ENCODE measurements at regions of chr22 and their contacts with region 1.

Region 1: DNA sequence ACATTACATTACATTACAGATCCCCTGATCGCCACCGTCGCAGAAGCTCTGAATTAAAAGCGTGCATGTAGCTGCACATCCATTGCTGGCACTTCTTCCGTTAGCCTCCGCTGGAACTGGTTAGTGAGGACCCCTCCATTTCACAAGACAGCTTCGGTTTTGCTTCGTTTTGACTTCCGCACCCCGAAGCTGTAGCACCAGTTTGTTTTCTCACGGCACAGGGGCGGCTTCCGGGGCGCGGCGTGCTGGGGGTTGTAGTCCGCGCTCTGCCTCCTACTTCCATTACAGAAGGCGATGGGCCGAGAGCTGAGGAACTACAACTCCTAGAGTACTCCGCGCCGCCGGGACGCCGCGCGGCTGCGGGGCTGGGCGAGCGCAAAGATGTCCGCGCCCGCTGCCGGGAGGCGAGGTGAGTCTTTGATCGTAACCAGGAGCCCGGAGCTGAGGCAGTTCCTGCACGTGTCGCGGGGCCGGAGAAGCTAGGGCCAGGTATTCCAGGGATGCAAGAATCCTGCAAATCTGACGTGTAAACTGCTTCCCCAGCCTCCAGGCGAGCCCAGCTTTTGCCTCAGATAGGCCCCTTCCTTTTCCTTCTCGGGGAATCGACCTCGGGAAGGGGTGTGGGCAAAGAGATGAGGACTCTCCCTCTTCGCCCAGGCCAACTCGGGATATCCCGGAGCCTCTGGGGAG is at the start of gene PEX26:
- DNase-seq: peak; percentile 95
- CTCF ChIP-seq: no peak

Region 2: GRCh38 chr22:17742527-17742902 is 335.3 kb before region 1 on chr22:
- CTCF ChIA-PET with region 1: interaction called, 66 read pairs
- POLR2A ChIA-PET with region 1: no interaction called
- DNase-seq: peak; percentile 92
- CTCF ChIP-seq: peak; percentile 87

Region 3: GRCh38 chr22:17842386-17842785 is 235.4 kb before region 1 on chr22:
- CTCF ChIA-PET with region 1: interaction called, 15 read pairs
- POLR2A ChIA-PET with region 1: no interaction called
- DNase-seq: peak; percentile 39
- CTCF ChIP-seq: no peak

Region 4: GRCh38 chr22:17903564-17904295 is 174.1 kb before region 1 on chr22:
- CTCF ChIA-PET with region 1: interaction called, 11 read pairs
- POLR2A ChIA-PET with region 1: no interaction called
- DNase-seq: no peak
- CTCF ChIP-seq: no peak

Region 5: DNA sequence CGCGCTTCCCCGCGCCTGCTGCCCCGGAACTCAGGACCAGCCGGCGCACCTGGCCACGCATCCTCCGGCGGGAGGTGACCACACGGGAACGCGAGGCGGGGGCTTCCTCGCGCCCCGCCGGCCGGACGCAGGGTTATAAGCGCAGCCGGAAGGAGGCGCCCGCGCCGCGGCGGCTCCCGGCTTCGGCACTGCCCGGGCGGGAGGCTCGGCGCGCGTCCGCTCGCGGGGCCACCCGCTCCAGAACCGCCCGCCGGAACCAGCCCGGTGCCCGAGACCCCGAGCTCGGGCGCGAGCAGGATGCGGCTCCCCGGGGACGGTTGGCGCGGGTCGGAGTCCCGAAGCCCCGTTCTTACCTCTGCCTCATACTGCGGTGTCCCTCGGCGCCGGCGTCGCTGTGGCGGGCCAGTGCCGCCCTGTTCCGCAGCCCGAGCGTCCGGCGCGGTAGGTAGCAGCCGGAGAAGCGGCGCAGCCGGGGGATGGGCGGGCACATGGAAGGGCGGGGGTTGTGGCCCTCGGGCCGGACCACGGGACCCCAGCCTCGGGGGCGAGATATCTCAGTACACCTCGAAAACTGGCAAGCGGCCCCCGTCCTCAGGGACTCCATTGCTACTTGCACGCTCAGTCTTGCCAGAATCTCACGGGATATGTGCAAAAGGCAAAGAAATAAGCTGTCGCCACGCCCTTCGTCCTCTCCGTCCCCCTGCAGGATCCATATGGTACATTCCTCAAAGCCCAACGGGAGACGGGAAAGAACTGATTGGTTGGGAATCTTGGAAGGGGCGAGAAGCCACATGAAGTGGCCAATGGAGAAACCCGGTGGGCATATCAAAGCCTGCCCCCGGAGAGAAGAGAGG is 76.5 kb before region 1 on chr22:
- CTCF ChIA-PET with region 1: interaction called, 23 read pairs
- POLR2A ChIA-PET with region 1: interaction called, 4 read pairs
- DNase-seq: peak; percentile 91
- CTCF ChIP-seq: peak; percentile 59

Region 6: DNA sequence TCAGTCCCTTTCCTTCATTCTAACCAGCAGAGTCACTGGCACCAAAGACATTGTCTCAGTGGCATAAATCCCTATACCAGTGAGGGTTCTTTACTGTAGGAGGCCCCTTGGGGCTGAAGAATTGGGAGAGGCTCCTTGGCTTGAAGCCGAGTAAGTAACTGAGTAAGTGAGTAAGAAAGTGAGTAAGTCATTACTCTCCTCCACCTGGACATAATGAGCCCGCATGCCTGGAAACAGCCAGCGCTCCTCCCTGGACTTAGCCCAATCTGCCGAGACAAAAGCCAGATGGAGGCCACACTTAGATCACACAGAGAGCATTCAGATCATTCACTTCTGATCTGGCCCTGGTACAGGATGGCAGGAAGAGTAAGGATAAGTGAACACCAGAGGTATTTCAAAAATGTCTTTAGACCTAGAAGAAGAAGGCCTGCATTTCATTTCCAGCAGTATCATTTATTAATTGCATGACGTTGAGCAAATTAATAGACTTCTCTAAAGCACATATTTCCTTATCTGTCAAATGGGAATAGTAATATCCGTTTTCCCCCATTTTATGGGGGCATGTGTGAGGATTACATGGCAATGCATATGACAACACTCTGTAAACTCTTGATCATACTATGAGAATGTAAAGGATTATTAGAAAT is 45.2 kb before region 1 on chr22:
- CTCF ChIA-PET with region 1: interaction called, 16 read pairs
- POLR2A ChIA-PET with region 1: no interaction called
- DNase-seq: no peak
- CTCF ChIP-seq: no peak

Region 7: GRCh38 chr22:18091916-18092526 is 14.2 kb after region 1 on chr22:
- CTCF ChIA-PET with region 1: interaction called, 59 read pairs
- POLR2A ChIA-PET with region 1: interaction called, 13 read pairs
- DNase-seq: no peak
- CTCF ChIP-seq: no peak

Region 8: GRCh38 chr22:19195796-19196731 is 1118.3 kb after region 1 on chr22:
- CTCF ChIA-PET with region 1: no interaction called
- POLR2A ChIA-PET with region 1: no interaction called
- DNase-seq: no peak
- CTCF ChIP-seq: no peak

Measured in GM10248 (cell line).